Transverse colon (tissue), 4 donors: ENCODE measurements at regions of chr20 and their contacts with region 1.

Region 1: GRCh38 chr20:62376112-62377063 is 9.3 kb upstream of the LAMA5 start:
- DNase-seq: no peak
- H3K4me3 ChIP-seq: no peak overlapping the region
- H3K27ac ChIP-seq: peak overlapping the region; percentile 61 to 88 (median 77)
- H3K4me1 ChIP-seq: peaks cover 25 to 44% (median 38%) of the 10 kb centered on the region in 4 donors
- H3K27me3 ChIP-seq: peaks cover 4% of the 10 kb centered on the region
- CTCF ChIP-seq: peak; percentile 37 to 54 (median 43)
- EP300 ChIP-seq: no peak
- POLR2A ChIP-seq: no peak

Region 2: GRCh38 chr20:62302341-62303058 is 73.9 kb before region 1 on chr20 and contains the start of gene ADRM1:
- in situ Hi-C with region 1: loop called in 2 of 4 experiments (anchors 10 kb)
- intact Hi-C with region 1: loop called (anchors 2 kb)
- DNase-seq: peak; percentile 97
- H3K4me3 ChIP-seq: peak within 1 kb of the TSS; percentile 71 to 98 (median 89)
- H3K27ac ChIP-seq: peak within 1 kb of the TSS; percentile 97 to 100 (median 98)
- H3K4me1 ChIP-seq: peaks cover 15 to 23% (median 20%) of the 10 kb centered on the region in 4 donors
- H3K27me3 ChIP-seq: no peaks in the 10 kb centered on the region
- CTCF ChIP-seq: peak; percentile 91 to 99 (median 96)
- EP300 ChIP-seq: no peak
- POLR2A ChIP-seq: peak; percentile 58
- total RNA-seq, gene ADRM1: 41.8 to 126 (median 109) TPM

Region 3: DNA sequence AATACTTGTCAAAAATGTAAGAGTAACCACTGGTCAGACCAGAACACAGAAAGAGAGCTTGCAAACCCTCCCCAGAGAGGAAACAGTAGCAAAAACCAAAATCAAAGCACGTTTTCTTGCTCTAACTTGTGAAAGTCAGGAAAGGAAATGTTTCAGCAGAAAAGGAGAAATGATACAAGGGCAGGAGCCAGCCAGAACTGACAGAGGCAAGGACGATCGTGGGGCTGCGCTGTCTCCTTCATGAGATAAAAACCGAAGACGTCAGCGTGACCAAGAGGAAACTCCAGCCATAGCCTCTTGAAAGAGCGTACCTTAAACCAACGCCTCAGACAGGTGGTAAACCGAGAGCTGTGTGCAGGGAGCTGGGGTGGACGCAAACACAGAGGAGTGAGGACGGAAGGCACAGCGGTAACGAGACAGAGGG is 36.7 kb before region 1 on chr20:
- in situ Hi-C with region 1: no loop called
- intact Hi-C with region 1: loop called (anchors 5 kb)
- DNase-seq: peak; percentile 61
- H3K4me3 ChIP-seq: no peak overlapping the region
- H3K27ac ChIP-seq: peak overlapping the region in 2 of 4 donors; percentile 19 to 42
- H3K4me1 ChIP-seq: no peaks in the 10 kb centered on the region
- H3K27me3 ChIP-seq: no peaks in the 10 kb centered on the region
- CTCF ChIP-seq: no peak
- EP300 ChIP-seq: no peak
- POLR2A ChIP-seq: no peak

Region 4: DNA sequence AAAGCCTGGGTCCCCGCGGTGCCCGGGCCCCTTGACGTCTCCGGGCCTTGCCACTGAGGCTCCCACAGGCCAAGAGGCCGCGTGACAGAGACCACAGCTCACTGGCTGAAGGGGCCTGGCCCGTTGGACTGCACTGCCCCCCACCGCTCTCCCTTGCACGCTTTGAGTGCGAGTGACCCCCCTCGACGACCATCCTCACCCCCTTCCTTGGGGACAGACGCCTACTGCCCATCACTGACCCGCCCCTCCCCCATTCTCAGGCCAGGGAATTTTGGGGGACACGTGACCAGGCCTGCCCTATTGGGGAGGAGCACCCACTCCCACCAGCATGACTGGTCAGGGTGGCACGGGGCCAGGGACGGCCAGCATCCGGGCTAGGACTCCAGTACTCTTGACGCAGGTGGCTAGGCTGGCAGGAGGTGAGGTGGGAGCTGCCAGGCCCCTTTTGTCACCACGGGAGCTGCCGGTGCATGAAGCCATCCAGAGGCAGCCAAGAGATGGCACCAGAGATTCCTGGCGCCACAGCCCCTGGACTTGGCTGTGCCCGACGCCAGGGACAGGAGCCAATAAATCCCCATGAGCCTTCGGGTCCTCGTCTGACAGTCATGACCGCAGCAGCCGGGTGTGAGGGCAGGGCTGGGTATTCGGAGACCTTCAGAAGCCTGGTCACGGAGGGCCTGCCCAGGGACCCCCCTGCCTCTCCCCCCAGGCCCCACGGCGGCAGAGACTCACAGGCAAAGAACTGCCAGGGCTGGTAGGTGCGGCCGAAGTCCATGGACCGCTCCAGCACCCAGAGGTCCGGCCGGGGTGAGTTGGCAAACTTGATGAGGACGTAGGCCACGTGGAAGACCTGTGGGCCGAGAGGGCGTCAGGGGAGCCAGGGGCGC is 23.7 kb before region 1 on chr20:
- in situ Hi-C with region 1: no loop called
- intact Hi-C with region 1: loop called (anchors 2 kb)
- DNase-seq: no peak
- H3K4me3 ChIP-seq: no peak overlapping the region
- H3K27ac ChIP-seq: peak overlapping the region; percentile 62 to 87 (median 74)
- H3K4me1 ChIP-seq: peaks cover 33 to 52% (median 38%) of the 10 kb centered on the region in 4 donors
- H3K27me3 ChIP-seq: no peaks in the 10 kb centered on the region
- CTCF ChIP-seq: peak in 3 of 5 experiments; percentile 11 to 32 (median 12)
- EP300 ChIP-seq: no peak
- POLR2A ChIP-seq: no peak